Ovary (tissue), 10 donors: ENCODE measurements at regions of chr16 and their contacts with region 1.

Region 1: DNA sequence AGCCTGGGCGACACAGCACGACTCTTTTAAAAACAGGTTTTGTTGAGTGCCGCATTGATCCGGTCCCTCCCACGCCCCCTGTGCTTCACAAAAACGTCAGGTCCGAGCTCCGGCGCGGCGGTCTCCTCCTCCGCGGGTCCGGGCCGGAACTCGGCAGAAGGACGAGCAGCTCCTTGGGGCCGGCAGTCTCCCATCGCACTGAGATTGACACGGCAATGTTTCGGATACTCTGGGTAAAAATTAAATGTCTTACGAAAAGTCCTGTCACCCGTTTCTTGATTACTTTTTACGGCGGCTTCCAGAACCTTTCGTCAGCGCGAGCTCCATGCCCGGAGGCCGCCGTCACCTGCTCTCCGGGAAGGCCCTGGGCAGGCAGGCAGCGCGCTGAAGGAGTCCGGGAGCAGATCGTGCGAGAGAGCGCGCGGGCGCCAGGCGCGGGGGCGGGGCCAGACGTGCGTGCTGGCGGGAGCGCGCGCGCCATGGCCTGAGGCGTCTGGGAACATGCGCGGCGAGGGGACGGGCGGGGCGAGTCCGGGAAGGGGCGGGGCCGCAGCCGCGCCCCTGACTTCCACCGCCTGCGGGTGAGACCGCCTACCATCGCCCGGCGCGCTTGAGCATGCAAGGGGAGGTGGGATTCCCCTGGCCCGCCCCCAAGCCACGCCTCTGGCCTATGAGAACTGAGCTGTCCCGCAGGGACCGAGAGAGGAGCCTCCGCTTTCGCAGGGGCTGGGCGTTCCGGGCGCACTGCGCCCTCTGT is 11.7 kb upstream of the SRL start:
- DNase-seq: peak; percentile 100
- H3K4me3 ChIP-seq: peak overlapping the region; percentile 69
- H3K27ac ChIP-seq: peak overlapping the region; percentile 75 to 91
- H3K4me1 ChIP-seq: no peaks in the 10 kb centered on the region
- H3K27me3 ChIP-seq: no peaks in the 10 kb centered on the region
- CTCF ChIP-seq: no peak
- EP300 ChIP-seq: peak; percentile 74
- POLR2A ChIP-seq: peak; percentile 82

Region 2: GRCh38 chr16:3983081-3983520 is 270.5 kb before region 1 on chr16:
- intact Hi-C with region 1: loop called in 2 of 4 experiments (anchors 5 kb)
- DNase-seq: peak; percentile 70 to 79 (median 77)
- H3K4me3 ChIP-seq: no peak overlapping the region
- H3K27ac ChIP-seq: no peak overlapping the region
- H3K4me1 ChIP-seq: peaks cover 3% of the 10 kb centered on the region
- H3K27me3 ChIP-seq: no peaks in the 10 kb centered on the region
- CTCF ChIP-seq: peak; percentile 58 to 68 (median 59)
- EP300 ChIP-seq: no peak
- POLR2A ChIP-seq: no peak

Region 3: DNA sequence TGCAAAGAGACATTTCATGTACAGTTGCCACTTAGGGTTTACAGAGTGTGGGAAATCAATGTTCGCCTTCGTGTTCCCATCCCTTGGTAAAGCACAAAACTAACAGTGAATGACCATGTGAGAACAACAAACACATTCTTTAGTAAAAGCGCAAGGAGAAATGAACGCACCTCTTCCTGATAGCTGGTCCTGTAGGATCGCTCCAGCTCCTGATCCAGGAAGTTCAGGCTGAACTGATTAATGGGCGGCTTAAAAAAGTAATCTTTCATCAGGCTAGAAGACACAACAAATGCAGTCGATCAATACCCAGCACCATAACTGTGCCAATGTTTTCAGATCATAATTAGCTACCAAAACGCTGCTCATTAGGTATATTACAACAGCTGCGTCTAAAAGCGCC is 264.7 kb before region 1 on chr16:
- intact Hi-C with region 1: loop called in 2 of 4 experiments (anchors 5 kb)
- DNase-seq: no peak
- H3K4me3 ChIP-seq: no peak overlapping the region
- H3K27ac ChIP-seq: no peak overlapping the region
- H3K4me1 ChIP-seq: no peaks in the 10 kb centered on the region
- H3K27me3 ChIP-seq: no peaks in the 10 kb centered on the region
- CTCF ChIP-seq: no peak
- EP300 ChIP-seq: no peak
- POLR2A ChIP-seq: no peak

Region 4: GRCh38 chr16:4200000-4200780 is 53.4 kb before region 1 on chr16:
- intact Hi-C with region 1: loop called in 3 of 4 experiments (anchors 5 to 10 kb)
- DNase-seq: peak; percentile 73 to 84 (median 75)
- H3K4me3 ChIP-seq: no peak overlapping the region
- H3K27ac ChIP-seq: no peak overlapping the region
- H3K4me1 ChIP-seq: peaks cover 3% of the 10 kb centered on the region
- H3K27me3 ChIP-seq: no peaks in the 10 kb centered on the region
- CTCF ChIP-seq: peak; percentile 46 to 76 (median 68)
- EP300 ChIP-seq: no peak
- POLR2A ChIP-seq: no peak